A549 (cell line): ENCODE measurements at regions of chr19 and their contacts with region 1.

Region 1: GRCh38 chr19:40139533-40140287 is 49.0 kb upstream of the ZNF780A start:
- DNase-seq: peak; percentile 77 to 79
- ATAC-seq: peak; percentile 59 to 71
- H3K4me3 ChIP-seq: no peak overlapping the region
- H3K27ac ChIP-seq: no peak overlapping the region
- H3K4me1 ChIP-seq: no peaks in the 10 kb centered on the region
- CTCF ChIP-seq: peak; percentile 99
- EP300 ChIP-seq: no peak
- POLR2A ChIP-seq: no peak
- RAD21 ChIP-seq: peak; percentile 100

Region 2: GRCh38 chr19:40090241-40091204 is 49.2 kb before region 1 on chr19 and contains the start of gene ZNF780A:
- CTCF ChIA-PET with region 1: interaction called, 38 read pairs
- POLR2A ChIA-PET with region 1: no interaction called
- DNase-seq: peak; percentile 89 to 97
- ATAC-seq: peak; percentile 96 to 98
- H3K4me3 ChIP-seq: peak within 1 kb of the TSS; percentile 67
- H3K27ac ChIP-seq: peak within 1 kb of the TSS; percentile 84 to 92
- H3K4me1 ChIP-seq: peaks cover 6% of the 10 kb centered on the region; the same call in 2 of the 3 replicates
- CTCF ChIP-seq: no peak
- EP300 ChIP-seq: peak in 1 of 2 experiments; percentile 25; a peak in 1 of 5 replicates
- POLR2A ChIP-seq: peak; percentile 94
- RAD21 ChIP-seq: no peak
- polyA plus RNA-seq, gene ZNF780A: 39.3 and 48.1 TPM in 2 replicates

Region 3: GRCh38 chr19:40155749-40156265 is 16.1 kb after region 1 on chr19:
- CTCF ChIA-PET with region 1: interaction called, 86 read pairs
- POLR2A ChIA-PET with region 1: no interaction called
- DNase-seq: peak; percentile 80 to 84
- ATAC-seq: peak; percentile 87 to 93
- H3K4me3 ChIP-seq: no peak overlapping the region
- H3K27ac ChIP-seq: peak overlapping the region in 1 of 2 experiments; percentile 42; a peak in 3 of 6 replicates
- H3K4me1 ChIP-seq: no peaks in the 10 kb centered on the region
- CTCF ChIP-seq: peak; percentile 73
- EP300 ChIP-seq: no peak
- POLR2A ChIP-seq: no peak
- RAD21 ChIP-seq: peak; percentile 72 to 82

Region 4: DNA sequence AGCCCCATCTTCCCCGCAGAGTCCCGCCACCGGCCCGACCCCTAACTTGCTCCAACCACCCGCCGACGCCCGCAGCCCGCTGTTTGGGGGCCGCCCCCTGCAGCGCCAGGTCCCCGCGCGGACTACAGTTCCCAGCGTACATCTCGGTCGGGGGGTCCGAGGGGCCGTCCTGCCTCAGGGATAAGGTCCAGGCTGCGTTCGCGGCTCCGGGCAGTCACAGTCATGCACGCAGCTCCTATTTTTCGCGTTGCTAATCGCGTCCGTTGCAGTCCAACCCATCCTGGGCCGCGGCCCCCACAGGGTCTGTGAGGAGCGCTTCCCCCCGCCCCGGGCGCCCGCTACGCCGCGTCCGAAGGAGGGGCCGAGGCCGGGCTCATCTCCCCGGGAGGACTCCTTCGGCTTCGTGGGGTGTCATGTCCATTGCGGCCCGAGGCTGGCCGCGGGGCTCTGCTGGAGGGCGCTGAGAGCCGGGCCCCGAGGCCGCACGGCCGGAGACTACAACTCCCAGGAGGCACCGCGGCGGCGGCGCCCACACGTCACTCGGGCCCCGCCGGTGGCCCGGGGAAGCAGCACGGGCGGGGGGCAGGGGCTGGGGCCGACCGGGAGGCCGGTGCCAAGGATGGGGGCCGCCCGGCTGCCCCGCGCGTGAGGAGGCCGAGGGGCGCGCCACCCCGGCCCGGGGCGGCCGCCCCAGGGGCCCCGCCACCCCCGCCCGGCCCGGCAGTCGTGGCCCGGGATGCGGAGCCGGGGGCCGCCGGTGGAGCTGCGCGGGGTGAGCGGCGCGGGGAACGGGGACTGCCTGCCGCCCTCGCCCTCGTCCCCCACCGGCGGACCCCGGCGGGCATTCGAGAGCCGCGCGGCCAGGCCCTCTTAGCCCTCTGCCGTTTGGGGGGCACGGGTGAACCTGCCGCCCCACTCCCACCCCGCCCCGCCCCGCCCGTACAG is 51.5 kb after region 1 on chr19 and contains the start of gene MAP3K10:
- CTCF ChIA-PET with region 1: interaction called, 35 read pairs
- POLR2A ChIA-PET with region 1: interaction called, 5 read pairs
- DNase-seq: peak; percentile 82 to 95
- ATAC-seq: peak; percentile 88 to 92
- H3K4me3 ChIP-seq: peak within 1 kb of the TSS; percentile 77
- H3K27ac ChIP-seq: peak within 1 kb of the TSS; percentile 88 to 92
- H3K4me1 ChIP-seq: peaks cover 21% of the 10 kb centered on the region
- CTCF ChIP-seq: no peak
- EP300 ChIP-seq: no peak
- POLR2A ChIP-seq: 0 out of 2 replicates have a peak, but pooled peaks have one; percentile 33
- RAD21 ChIP-seq: no peak; a peak in 1 of 5 replicates
- polyA plus RNA-seq, gene MAP3K10: 6.0 and 6.6 TPM in 2 replicates

Region 5: GRCh38 chr19:40221858-40222837 is 82.4 kb after region 1 on chr19:
- CTCF ChIA-PET with region 1: interaction called, 129 read pairs
- POLR2A ChIA-PET with region 1: interaction called, 3 read pairs
- DNase-seq: peak; percentile 97 to 100
- ATAC-seq: peak; percentile 30 to 75
- H3K4me3 ChIP-seq: no peak overlapping the region
- H3K27ac ChIP-seq: no peak overlapping the region
- H3K4me1 ChIP-seq: peaks cover 35% of the 10 kb centered on the region
- CTCF ChIP-seq: peak; percentile 99
- EP300 ChIP-seq: no peak
- POLR2A ChIP-seq: no peak
- RAD21 ChIP-seq: peak; percentile 98 to 99

Region 6: GRCh38 chr19:40253611-40254092 is 113.9 kb after region 1 on chr19:
- CTCF ChIA-PET with region 1: interaction called, 13 read pairs
- POLR2A ChIA-PET with region 1: no interaction called
- DNase-seq: no peak
- ATAC-seq: no peak
- H3K4me3 ChIP-seq: no peak overlapping the region
- H3K27ac ChIP-seq: no peak overlapping the region
- H3K4me1 ChIP-seq: 0 out of 3 replicates have a peak, but pooled peaks cover 4% of the 10 kb centered on the region
- CTCF ChIP-seq: no peak
- EP300 ChIP-seq: no peak
- POLR2A ChIP-seq: no peak
- RAD21 ChIP-seq: no peak

Region 7: DNA sequence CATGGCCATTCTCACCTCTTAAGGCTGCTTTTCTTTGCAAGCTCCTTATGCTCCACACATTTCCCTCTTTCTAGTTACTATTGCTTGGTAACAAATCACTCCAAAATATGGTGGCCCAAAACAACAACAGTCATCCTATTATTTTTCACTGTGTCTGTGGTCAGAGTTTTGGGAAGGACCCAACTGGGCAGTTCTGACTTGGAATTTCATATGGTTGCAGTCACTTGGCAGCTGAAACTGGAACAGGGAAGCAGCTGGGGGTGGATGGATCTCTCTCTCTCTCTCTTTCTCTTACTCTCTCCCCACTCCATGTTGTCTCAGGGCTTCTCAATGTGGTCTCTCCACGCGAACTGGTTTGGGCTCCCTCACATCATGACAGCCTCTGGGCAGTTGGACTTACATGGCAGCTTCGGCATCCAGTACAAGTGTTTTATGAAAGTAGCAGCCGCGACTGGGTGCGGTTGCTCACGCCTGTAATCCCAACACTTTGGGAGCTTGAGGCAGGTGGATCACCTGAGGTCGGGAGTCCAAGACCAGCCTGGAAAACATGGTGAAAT is 511.1 kb after region 1 on chr19:
- CTCF ChIA-PET with region 1: interaction called, 12 read pairs
- POLR2A ChIA-PET with region 1: no interaction called
- DNase-seq: no peak
- ATAC-seq: no peak
- H3K4me3 ChIP-seq: no peak overlapping the region
- H3K27ac ChIP-seq: no peak overlapping the region
- H3K4me1 ChIP-seq: peaks cover 11% of the 10 kb centered on the region
- CTCF ChIP-seq: no peak
- EP300 ChIP-seq: no peak
- POLR2A ChIP-seq: no peak
- RAD21 ChIP-seq: no peak